Activated CD4-positive, alpha-beta memory T cell treated with anti-CD3 and anti-CD28 coated beads, Interleukin-2, amount 10 ng/mL, durations not matched to agents 7 days and 5 days (primary cell): ENCODE measurements at regions of chr11 and their contacts with region 1.

Region 1: GRCh38 chr11:73184953-73185671 is 33.0 kb upstream of the P2RY2 start:
- DNase-seq: peak; percentile 64
- H3K4me3 Mint-ChIP-seq: peak overlapping the region; percentile 24
- H3K27ac Mint-ChIP-seq: no peak overlapping the region
- H3K4me1 Mint-ChIP-seq: peaks cover 7% of the 10 kb centered on the region
- H3K27me3 Mint-ChIP-seq: peaks cover 28% of the 10 kb centered on the region

Region 2: DNA sequence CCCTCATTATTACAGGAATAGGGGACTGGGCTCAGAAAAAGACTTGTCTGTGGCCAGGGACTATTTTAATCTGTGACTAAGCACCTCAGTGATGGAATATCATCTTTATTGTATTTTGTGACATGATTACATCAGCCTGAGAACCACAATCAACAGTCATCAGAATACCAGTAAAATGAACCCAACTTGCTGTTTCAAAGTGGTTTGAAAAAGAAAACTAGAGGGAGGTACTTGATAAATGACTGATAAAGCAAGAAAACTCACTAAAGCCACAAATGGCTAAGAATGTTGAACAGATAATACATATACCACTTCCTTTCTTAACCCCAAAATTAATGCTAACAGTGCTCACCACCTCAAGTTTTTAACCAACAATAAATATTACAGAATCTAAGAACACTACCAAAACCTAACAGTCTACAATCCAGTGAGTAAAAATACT is 215.2 kb before region 1 on chr11:
- CTCF ChIA-PET with region 1: no interaction called
- POLR2A ChIA-PET with region 1: no interaction called
- DNase-seq: no peak
- H3K4me3 Mint-ChIP-seq: peak overlapping the region; percentile 8
- H3K27ac Mint-ChIP-seq: peak overlapping the region; percentile 72
- H3K4me1 Mint-ChIP-seq: peaks cover 52% of the 10 kb centered on the region
- H3K27me3 Mint-ChIP-seq: no peaks in the 10 kb centered on the region

Region 3: DNA sequence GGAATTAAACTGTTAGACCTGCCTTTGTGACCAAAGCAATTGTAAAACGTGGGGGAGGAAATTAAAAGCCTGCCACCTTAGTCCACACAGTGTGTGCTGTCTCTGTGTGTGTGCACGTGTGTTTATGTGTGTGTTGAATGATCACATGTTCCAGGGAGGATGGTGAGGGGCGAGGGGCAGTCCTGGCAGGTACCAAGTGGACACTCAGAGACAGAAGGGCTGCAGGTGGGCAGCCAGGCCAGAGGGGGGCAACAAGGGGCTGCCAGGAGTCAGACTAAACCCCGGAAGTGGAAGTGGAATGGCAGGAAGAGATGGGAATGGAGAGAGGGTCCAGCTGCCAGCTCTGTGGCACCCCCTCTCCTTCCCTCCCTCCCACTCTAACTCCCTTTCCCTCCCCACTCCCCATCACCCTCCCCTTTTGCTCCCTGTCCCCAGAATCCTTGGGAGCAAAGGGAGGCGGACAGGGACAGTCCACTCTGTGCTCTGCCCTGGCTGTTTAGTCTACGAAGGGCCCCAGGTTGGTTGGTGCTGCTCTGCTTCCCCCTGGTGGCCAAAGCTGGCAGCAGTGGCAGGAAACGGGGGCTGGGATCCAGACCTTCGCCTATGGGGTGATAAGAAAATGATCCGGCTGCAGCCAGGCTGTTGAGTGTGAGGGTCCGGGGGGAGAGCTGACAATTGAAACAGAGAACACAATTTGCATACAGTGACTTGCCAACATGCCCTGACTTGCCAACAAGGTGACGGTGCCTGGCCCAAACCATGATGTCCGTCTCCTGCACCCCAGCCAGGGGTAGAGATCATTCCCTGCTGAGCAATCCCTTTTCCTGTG is 57.4 kb after region 1 on chr11:
- CTCF ChIA-PET with region 1: interaction called, 23 read pairs
- POLR2A ChIA-PET with region 1: no interaction called
- DNase-seq: peak; percentile 69
- H3K4me3 Mint-ChIP-seq: no peak overlapping the region
- H3K27ac Mint-ChIP-seq: no peak overlapping the region
- H3K4me1 Mint-ChIP-seq: peaks cover 8% of the 10 kb centered on the region
- H3K27me3 Mint-ChIP-seq: peaks cover 6% of the 10 kb centered on the region

Region 4: DNA sequence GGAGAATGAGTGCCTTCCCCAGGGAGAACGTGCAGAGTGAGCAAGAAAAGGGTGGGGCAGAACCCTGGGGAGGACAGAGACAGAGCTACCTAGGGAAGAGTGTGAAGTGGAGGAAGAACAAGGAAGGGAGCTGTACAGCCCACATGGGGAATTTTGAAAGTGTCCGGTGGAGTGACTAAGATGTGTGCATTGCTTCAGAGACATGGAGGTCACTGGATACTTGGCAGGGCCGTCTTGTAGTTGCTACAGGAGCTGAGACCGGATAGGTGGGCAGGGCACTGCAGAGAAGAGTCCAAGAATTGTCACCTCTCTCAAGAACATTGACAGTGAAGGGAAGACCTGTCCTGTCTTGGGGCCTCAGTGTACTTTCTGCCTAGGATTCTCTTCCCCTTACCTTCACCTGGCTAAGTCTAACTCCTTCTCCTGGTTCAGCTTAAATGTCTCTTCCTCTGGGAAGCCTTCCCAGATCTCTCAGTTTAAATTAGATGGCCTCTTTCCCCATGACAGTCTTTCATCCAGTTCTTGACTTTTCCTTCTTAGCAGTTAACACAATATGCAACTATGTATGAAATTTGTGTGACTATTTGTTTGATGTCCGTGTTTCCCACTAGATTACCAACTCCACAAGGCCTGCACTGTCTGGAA is 77.9 kb after region 1 on chr11:
- CTCF ChIA-PET with region 1: no interaction called
- POLR2A ChIA-PET with region 1: no interaction called
- DNase-seq: no peak
- H3K4me3 Mint-ChIP-seq: no peak overlapping the region
- H3K27ac Mint-ChIP-seq: no peak overlapping the region
- H3K4me1 Mint-ChIP-seq: no peaks in the 10 kb centered on the region
- H3K27me3 Mint-ChIP-seq: peaks cover 40% of the 10 kb centered on the region